Tibial artery (tissue), 4 donors: ENCODE measurements at regions of chr13 and their contacts with region 1.

Region 1: DNA sequence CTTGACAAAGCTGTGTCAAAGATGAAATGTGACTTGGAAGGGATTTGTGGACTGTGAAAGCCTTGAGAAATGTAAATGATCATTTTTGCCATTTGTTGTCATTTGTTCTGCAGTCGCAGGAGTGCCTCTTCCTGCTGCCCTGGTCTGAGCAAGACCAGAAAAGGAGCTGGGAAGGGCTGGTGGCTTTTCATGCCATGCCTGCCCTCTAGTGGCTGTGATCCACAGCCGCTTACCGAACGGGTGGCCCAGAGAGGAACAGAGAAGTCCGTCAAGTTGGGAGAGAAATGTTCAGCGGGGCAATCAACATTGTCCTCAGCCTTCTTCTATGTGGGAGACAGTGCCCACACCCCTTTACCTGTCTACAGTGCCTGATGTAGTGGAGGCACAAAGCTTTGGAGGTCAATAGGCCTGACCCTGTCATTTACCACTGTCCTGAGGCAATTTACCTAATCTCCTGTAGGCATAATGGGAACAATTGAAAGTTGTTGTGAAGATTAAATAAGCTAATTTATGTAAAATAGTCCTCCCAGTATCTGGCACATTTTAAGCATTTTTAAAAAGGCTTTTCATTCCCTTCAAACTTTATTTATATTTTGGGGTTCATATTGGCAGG is 224.4 kb downstream of the B3GLCT start:
- DNase-seq: peak; percentile 80 to 86
- H3K4me3 ChIP-seq: no peak overlapping the region
- H3K27ac ChIP-seq: no peak overlapping the region
- H3K4me1 ChIP-seq: no peaks in the 10 kb centered on the region
- H3K27me3 ChIP-seq: no peaks in the 10 kb centered on the region
- CTCF ChIP-seq: peak; percentile 84 to 87

Region 2: DNA sequence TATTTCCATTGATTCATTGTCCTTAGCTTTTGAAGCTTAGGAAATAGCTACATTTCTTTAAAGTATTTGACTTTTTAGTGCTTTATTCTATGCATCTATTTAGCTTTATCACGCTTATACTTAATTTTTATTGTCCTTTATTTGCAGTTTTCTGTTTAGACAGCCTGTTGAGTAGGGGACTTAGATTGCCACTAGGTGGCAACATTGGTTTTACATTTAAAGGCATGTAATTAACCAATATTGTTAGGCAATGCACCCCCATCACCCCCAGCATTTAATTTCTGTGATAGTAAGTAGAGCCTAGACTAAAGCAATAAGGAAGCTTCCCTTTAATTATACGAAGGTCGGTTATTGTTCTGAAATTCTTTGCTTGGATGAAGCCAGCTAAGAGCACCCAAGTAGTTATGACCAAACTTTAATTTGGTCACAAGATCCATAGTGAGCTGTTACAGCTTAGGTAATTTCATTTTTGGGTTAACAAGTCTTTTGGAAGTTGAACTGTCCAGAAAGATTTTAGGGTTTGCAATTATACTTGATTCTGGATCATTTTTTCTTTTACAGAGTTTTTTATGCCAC is 187.9 kb before region 1 on chr13:
- intact Hi-C with region 1: loop called (anchors 10 kb)
- DNase-seq: no peak
- H3K4me3 ChIP-seq: no peak overlapping the region
- H3K27ac ChIP-seq: no peak overlapping the region
- H3K4me1 ChIP-seq: no peaks in the 10 kb centered on the region
- H3K27me3 ChIP-seq: no peaks in the 10 kb centered on the region
- CTCF ChIP-seq: peak; percentile 55 to 64

Region 3: GRCh38 chr13:33379304-33379981 is 1955.2 kb after region 1 on chr13:
- intact Hi-C with region 1: no loop called
- DNase-seq: no peak
- H3K4me3 ChIP-seq: no peak overlapping the region
- H3K27ac ChIP-seq: no peak overlapping the region
- H3K4me1 ChIP-seq: no peaks in the 10 kb centered on the region
- H3K27me3 ChIP-seq: no peaks in the 10 kb centered on the region
- CTCF ChIP-seq: no peak